Thyroid gland (tissue), 4 donors: ENCODE measurements at regions of chr20 and their contacts with region 1.

Region 1: DNA sequence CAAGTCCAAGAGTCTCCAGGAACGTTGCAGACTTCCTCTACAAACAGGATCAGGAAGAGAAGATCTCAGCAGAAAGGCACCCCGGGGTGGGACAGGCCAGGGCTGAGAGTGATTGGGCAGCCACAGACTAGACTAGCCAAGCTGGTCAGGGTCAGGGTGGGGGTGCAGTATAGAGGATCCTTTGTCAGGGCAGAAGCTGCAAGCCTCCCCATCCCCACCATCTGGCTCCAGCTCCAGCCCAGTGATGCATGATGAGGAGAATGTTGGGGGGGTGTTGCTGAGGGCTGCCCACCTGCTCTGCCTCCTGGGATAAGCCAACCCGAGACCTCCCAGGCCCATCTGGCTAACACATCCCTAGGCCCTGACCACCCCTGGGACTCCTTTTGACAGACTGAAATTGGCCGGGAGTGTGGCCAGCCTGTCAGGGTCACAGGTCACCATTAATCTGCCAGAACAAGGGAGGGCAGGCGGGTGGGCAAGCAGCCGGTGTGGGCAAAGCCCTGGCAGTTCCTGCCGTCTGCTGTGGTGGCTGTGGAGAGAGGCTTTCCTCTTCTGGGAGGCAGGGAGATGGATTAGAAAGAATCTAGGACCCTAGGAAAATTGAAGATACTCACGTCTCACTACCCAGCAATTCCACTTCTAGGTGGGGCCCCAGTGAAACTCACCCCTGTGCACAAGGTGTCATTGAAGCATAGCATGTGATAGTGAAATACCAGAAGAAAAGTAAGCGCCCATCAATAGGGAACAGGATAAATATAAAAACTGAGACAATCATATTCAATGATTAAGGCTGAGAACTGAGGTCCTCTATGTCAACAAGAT is 22.1 kb upstream of the SNTA1 start:
- DNase-seq: no peak
- H3K4me3 ChIP-seq: no peak overlapping the region
- H3K27ac ChIP-seq: no peak overlapping the region
- H3K4me1 ChIP-seq: no peaks in the 10 kb centered on the region
- H3K27me3 ChIP-seq: no peaks in the 10 kb centered on the region
- CTCF ChIP-seq: no peak
- POLR2A ChIP-seq: no peak

Region 2: GRCh38 chr20:33299111-33299603 is 166.5 kb before region 1 on chr20:
- intact Hi-C with region 1: no loop called
- DNase-seq: peak; percentile 60 to 68
- H3K4me3 ChIP-seq: no peak overlapping the region
- H3K27ac ChIP-seq: no peak overlapping the region
- H3K4me1 ChIP-seq: peaks cover 0 to 5% of the 10 kb centered on the region in 2 donors
- H3K27me3 ChIP-seq: no peaks in the 10 kb centered on the region
- CTCF ChIP-seq: peak; percentile 75 to 94 (median 80)
- POLR2A ChIP-seq: no peak

Region 3: DNA sequence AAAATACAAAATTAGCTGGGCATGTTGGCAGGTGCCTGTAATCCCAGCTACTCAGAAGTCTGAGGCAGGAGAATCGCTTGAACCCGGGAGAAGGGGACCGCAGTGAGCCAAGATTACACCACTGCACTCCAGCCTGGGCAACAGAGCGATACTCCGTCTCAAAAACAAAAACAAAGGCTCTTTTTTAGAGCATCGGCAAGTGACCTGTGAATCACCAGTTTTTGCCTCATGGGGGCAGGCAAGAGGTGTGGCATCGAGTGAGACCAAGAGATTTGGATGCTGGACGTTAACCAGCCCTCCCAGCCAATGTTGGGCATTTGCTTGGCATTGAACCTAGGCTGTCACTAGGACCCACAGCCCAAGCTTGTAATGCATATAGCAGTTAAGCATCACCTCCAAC is 49.7 kb before region 1 on chr20:
- intact Hi-C with region 1: no loop called
- DNase-seq: peak; percentile 66 to 67
- H3K4me3 ChIP-seq: no peak overlapping the region
- H3K27ac ChIP-seq: no peak overlapping the region
- H3K4me1 ChIP-seq: peaks cover 0 to 6% of the 10 kb centered on the region in 2 donors
- H3K27me3 ChIP-seq: no peaks in the 10 kb centered on the region
- CTCF ChIP-seq: peak; percentile 20 to 55 (median 54)
- POLR2A ChIP-seq: no peak

Region 4: DNA sequence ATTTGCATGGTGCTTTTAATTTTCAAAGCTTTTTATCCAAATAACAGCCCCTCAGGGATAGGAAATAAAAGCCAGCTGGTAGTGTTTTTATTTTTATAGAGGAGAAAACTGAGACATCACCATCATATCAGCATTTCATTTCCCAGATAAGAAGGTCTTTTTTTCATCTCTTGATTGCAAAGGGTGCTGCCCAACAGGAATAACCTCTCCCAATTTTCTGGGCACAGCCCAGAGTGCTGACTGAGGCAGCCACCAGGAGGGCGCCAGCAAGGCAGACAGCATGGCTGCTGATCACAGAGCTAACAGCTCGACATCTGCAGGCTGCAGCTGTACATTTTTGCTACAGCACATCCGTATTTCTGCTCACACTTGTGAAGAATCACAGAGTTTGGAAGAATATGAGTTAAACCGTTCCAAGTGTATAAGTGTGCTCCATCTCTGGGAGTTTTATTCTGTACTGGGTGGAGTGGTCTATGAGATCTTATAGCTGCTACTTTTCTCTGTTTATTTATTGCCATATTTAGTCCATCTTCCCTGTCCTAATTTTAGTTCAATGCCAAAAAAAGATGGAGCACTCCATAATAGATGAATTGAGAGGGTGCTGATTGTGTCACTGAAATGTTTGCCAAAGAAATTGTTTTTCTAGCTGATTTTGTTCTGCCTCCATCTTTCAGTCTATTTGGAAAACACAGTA is 110.9 kb after region 1 on chr20:
- intact Hi-C with region 1: no loop called
- DNase-seq: no peak
- H3K4me3 ChIP-seq: no peak overlapping the region
- H3K27ac ChIP-seq: no peak overlapping the region
- H3K4me1 ChIP-seq: peaks cover 0 to 9% of the 10 kb centered on the region in 2 donors
- H3K27me3 ChIP-seq: no peaks in the 10 kb centered on the region
- CTCF ChIP-seq: no peak
- POLR2A ChIP-seq: no peak

Region 5: GRCh38 chr20:34129518-34130162 is 663.9 kb after region 1 on chr20:
- intact Hi-C with region 1: loop called (anchors 10 kb)
- DNase-seq: peak; percentile 53 to 56
- H3K4me3 ChIP-seq: no peak overlapping the region
- H3K27ac ChIP-seq: no peak overlapping the region
- H3K4me1 ChIP-seq: no peaks in the 10 kb centered on the region
- H3K27me3 ChIP-seq: no peaks in the 10 kb centered on the region
- CTCF ChIP-seq: peak; percentile 66 to 90 (median 86)
- POLR2A ChIP-seq: no peak